Caco-2 (cell line): ENCODE measurements at regions of chr4 and their contacts with region 1.

Region 1: GRCh38 chr4:78056265-78057129 is 626 bp upstream of the FRAS1 start:
- DNase-seq: peak; percentile 70 to 76
- H3K4me3 ChIP-seq: peak overlapping the region; percentile 70
- H3K4me3 Mint-ChIP-seq: peak overlapping the region; percentile 88
- H3K27ac Mint-ChIP-seq: peak overlapping the region; percentile 87
- H3K4me1 ChIP-seq: no peaks in the 10 kb centered on the region; the same call in 1 of the 2 replicates
- H3K4me1 Mint-ChIP-seq: peaks cover 4% of the 10 kb centered on the region
- H3K27me3 ChIP-seq: no peaks in the 10 kb centered on the region
- H3K27me3 Mint-ChIP-seq: no peaks in the 10 kb centered on the region
- CTCF ChIP-seq: peak in 1 of 2 experiments; percentile 19

Region 2: GRCh38 chr4:77959566-77960338 is 96.7 kb before region 1 on chr4:
- CTCF ChIA-PET with region 1: interaction called, 4 read pairs
- POLR2A ChIA-PET with region 1: no interaction called
- intact Hi-C with region 1: loop called (anchors 1 kb)
- DNase-seq: peak in 1 of 2 experiments; percentile 47
- H3K4me3 ChIP-seq: no peak overlapping the region
- H3K4me3 Mint-ChIP-seq: no peak overlapping the region
- H3K27ac Mint-ChIP-seq: no peak overlapping the region
- H3K4me1 ChIP-seq: no peaks in the 10 kb centered on the region
- H3K4me1 Mint-ChIP-seq: no peaks in the 10 kb centered on the region
- H3K27me3 ChIP-seq: no peaks in the 10 kb centered on the region
- H3K27me3 Mint-ChIP-seq: no peaks in the 10 kb centered on the region
- CTCF ChIP-seq: peak; percentile 63

Region 3: DNA sequence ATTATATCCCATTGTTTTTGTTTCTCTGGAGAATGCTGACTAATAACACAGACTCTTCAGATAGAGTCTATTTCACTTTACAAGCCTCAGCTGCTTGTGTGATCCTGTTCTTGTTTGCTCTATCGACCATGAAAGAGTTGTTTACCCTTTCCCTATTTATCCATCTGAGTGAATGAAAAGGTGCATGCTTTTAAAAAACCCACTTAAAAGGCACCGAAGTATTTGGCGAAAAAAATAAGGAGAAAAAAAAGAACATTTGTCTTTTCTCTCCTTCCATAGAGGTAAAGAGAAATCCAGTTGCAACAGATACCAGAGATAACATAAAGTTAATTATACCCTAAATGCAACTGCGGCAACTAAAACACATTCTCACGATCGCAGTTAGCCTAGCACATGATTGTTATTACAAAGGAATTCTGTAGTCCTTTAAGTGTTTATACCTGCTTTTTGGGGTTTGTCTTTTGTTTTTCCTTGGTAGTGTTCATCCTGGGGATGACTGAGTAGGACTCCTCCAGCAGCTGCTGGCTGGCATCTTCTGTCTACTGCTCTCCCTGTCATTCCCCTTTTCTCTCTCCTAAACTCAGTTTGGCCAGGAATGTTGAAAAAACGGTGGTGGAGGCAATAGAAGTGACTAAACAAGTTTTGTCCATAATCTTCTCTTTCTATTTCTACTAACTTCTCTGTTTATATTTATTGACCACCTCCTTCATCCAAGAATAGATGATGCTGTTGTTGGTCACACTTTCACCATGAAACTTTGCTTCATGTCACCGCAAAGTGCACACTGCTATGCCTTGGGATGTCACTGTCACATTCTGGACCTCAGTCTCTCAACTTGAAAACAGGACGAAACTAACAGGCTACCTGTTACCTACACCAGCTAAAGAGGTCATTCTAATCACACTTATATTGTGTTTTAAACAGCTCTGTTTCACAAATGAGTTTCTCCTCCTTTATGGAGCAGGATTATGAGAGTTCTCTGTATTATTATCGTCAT is 41.3 kb before region 1 on chr4:
- CTCF ChIA-PET with region 1: no interaction called
- POLR2A ChIA-PET with region 1: no interaction called
- intact Hi-C with region 1: no loop called
- DNase-seq: no peak
- H3K4me3 ChIP-seq: no peak overlapping the region
- H3K4me3 Mint-ChIP-seq: no peak overlapping the region
- H3K27ac Mint-ChIP-seq: no peak overlapping the region
- H3K4me1 ChIP-seq: no peaks in the 10 kb centered on the region
- H3K4me1 Mint-ChIP-seq: peaks cover 14% of the 10 kb centered on the region
- H3K27me3 ChIP-seq: no peaks in the 10 kb centered on the region
- H3K27me3 Mint-ChIP-seq: no peaks in the 10 kb centered on the region
- CTCF ChIP-seq: no peak

Region 4: DNA sequence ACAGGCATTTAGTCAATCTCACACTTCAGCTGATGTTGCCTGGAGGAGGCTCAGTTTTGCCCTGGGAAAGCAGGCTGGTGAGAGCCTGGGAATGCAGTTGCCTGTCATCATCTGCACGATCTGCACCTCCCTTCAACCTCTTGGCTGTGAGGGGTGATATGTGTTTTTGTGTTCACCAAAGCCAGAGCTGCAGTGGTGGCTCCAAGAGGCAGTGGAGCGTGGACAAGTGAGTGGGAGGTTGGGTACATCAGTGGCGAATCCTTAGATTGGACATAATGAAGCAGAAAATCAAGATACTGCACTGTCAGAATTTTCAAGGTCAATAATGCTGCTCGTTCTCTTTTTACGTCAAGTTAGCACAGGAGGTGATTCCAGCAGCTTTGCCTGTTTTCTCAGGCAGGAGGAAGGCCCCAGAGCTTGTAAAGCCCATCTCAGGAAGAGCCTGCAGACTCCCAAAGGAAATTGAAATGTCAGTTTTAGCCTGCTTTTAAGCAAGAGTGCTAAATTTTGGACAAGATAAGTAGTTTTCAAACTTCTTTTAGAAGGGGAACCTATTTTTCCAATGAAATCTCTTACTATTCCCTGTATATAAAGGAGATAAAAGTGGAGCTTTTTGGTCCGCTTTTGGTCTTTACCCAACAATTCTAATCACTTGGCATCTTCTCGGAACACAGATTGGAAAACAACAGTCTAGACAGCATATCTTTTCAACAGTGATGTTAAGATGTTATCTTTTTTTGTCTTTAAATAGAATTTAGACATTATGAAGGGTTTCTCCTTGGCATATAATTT is 93.5 kb after region 1 on chr4:
- CTCF ChIA-PET with region 1: interaction called, 9 read pairs
- POLR2A ChIA-PET with region 1: no interaction called
- intact Hi-C with region 1: loop called (anchors 2 kb)
- DNase-seq: no peak
- H3K4me3 ChIP-seq: no peak overlapping the region
- H3K4me3 Mint-ChIP-seq: peak overlapping the region; percentile 40
- H3K27ac Mint-ChIP-seq: no peak overlapping the region
- H3K4me1 ChIP-seq: peaks cover 27% of the 10 kb centered on the region
- H3K4me1 Mint-ChIP-seq: peaks cover 29% of the 10 kb centered on the region
- H3K27me3 ChIP-seq: no peaks in the 10 kb centered on the region
- H3K27me3 Mint-ChIP-seq: no peaks in the 10 kb centered on the region
- CTCF ChIP-seq: no peak

Region 5: GRCh38 chr4:78174891-78175290 is 118.4 kb after region 1 on chr4:
- CTCF ChIA-PET with region 1: interaction called, 10 read pairs
- POLR2A ChIA-PET with region 1: no interaction called
- intact Hi-C with region 1: loop called (anchors 5 kb)
- DNase-seq: no peak
- H3K4me3 ChIP-seq: no peak overlapping the region
- H3K4me3 Mint-ChIP-seq: no peak overlapping the region
- H3K27ac Mint-ChIP-seq: peak overlapping the region; percentile 85
- H3K4me1 ChIP-seq: peaks cover 61% of the 10 kb centered on the region
- H3K4me1 Mint-ChIP-seq: peaks cover 43% of the 10 kb centered on the region
- H3K27me3 ChIP-seq: no peaks in the 10 kb centered on the region
- H3K27me3 Mint-ChIP-seq: no peaks in the 10 kb centered on the region
- CTCF ChIP-seq: no peak

Region 6: GRCh38 chr4:78336093-78336943 is 279.8 kb after region 1 on chr4:
- CTCF ChIA-PET with region 1: no interaction called
- POLR2A ChIA-PET with region 1: no interaction called
- intact Hi-C with region 1: loop called (anchors 5 kb)
- DNase-seq: peak in 1 of 2 experiments; percentile 27
- H3K4me3 ChIP-seq: no peak overlapping the region
- H3K4me3 Mint-ChIP-seq: no peak overlapping the region
- H3K27ac Mint-ChIP-seq: no peak overlapping the region
- H3K4me1 ChIP-seq: peaks cover 30% of the 10 kb centered on the region
- H3K4me1 Mint-ChIP-seq: peaks cover 37% of the 10 kb centered on the region
- H3K27me3 ChIP-seq: no peaks in the 10 kb centered on the region
- H3K27me3 Mint-ChIP-seq: no peaks in the 10 kb centered on the region
- CTCF ChIP-seq: no peak

Region 7: DNA sequence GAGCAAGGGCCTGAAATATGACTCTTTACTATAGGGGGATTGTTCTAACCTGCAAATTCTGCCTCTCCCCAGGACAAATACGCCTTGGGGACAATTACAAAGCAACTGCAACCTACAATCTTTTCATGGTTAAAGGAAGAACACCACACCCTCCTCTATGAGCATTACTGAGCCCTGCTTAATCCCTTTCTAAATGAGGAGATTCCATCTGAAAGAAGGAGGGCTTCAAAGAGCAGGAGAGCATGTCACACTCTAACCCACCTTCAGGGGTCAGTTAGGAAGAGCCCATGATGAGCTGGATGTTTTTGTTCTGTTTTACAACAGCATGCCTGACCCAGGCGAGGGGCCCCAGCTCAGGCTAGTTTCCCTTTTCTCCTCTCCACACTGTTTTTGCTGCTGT is 361.1 kb after region 1 on chr4:
- CTCF ChIA-PET with region 1: no interaction called
- POLR2A ChIA-PET with region 1: no interaction called
- intact Hi-C with region 1: loop called (anchors 5 kb)
- DNase-seq: no peak
- H3K4me3 ChIP-seq: no peak overlapping the region
- H3K4me3 Mint-ChIP-seq: no peak overlapping the region
- H3K27ac Mint-ChIP-seq: no peak overlapping the region
- H3K4me1 ChIP-seq: no peaks in the 10 kb centered on the region
- H3K4me1 Mint-ChIP-seq: no peaks in the 10 kb centered on the region
- H3K27me3 ChIP-seq: no peaks in the 10 kb centered on the region
- H3K27me3 Mint-ChIP-seq: no peaks in the 10 kb centered on the region
- CTCF ChIP-seq: no peak

Region 8: GRCh38 chr4:78569291-78569821 is 512.9 kb after region 1 on chr4:
- CTCF ChIA-PET with region 1: no interaction called
- POLR2A ChIA-PET with region 1: no interaction called
- intact Hi-C with region 1: loop called (anchors 5 kb)
- DNase-seq: peak; percentile 65 to 70
- H3K4me3 ChIP-seq: no peak overlapping the region
- H3K4me3 Mint-ChIP-seq: peak overlapping the region; percentile 46
- H3K27ac Mint-ChIP-seq: peak overlapping the region; percentile 85
- H3K4me1 ChIP-seq: peaks cover 63% of the 10 kb centered on the region
- H3K4me1 Mint-ChIP-seq: peaks cover 40% of the 10 kb centered on the region
- H3K27me3 ChIP-seq: no peaks in the 10 kb centered on the region
- H3K27me3 Mint-ChIP-seq: no peaks in the 10 kb centered on the region
- CTCF ChIP-seq: no peak